Activated CD4-positive, alpha-beta T cell treated with anti-CD3 and anti-CD28 coated beads for 36 hours (primary cell): ENCODE measurements at regions of chr7 and their contacts with region 1.

Region 1: GRCh38 chr7:129376076-129376777 is 58.0 kb upstream of the STRIP2 start:
- DNase-seq: peak; percentile 80
- ATAC-seq: peak; percentile 88
- H3K4me3 Mint-ChIP-seq: no peak overlapping the region
- H3K27ac Mint-ChIP-seq: no peak overlapping the region
- H3K4me1 Mint-ChIP-seq: peaks cover 30% of the 10 kb centered on the region
- H3K27me3 Mint-ChIP-seq: no peaks in the 10 kb centered on the region

Region 2: GRCh38 chr7:128550920-128551319 is 825.3 kb before region 1 on chr7:
- CTCF ChIA-PET with region 1: no interaction called
- POLR2A ChIA-PET with region 1: no interaction called
- intact Hi-C with region 1: no loop called
- DNase-seq: no peak
- ATAC-seq: no peak
- H3K4me3 Mint-ChIP-seq: no peak overlapping the region
- H3K27ac Mint-ChIP-seq: no peak overlapping the region
- H3K4me1 Mint-ChIP-seq: peaks cover 4% of the 10 kb centered on the region
- H3K27me3 Mint-ChIP-seq: no peaks in the 10 kb centered on the region

Region 3: DNA sequence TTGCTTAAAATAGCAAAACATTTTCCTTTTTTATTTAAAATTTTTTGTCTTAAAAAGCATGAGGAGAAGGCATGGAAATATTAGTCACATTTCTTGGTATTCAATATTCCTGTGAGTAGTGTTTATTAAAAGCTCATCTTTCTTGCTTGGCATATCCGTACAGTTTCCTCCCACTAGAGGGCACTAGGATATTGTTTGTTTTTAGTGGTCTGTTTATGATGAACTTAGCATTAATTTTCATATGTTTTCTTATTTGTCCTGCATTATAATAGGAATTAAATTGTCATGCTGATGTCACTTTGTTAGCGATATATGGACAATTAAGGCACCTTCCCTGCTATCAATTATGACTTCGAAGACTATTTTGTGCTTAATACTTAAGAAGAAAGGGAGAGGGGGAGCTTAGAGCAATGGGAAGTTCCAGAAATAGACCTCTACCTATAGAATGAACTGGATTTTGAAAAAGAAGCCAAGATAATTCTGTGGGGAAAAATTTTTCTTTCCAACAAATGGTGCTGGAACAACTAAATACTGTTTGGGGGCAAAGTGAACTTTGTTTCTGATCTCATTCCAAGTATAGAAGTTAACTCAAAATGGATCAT is 33.0 kb before region 1 on chr7:
- CTCF ChIA-PET with region 1: interaction called, 14 read pairs
- POLR2A ChIA-PET with region 1: no interaction called
- intact Hi-C with region 1: loop called (anchors 1 to 2 kb)
- DNase-seq: peak; percentile 9
- ATAC-seq: peak; percentile 36
- H3K4me3 Mint-ChIP-seq: no peak overlapping the region
- H3K27ac Mint-ChIP-seq: no peak overlapping the region
- H3K4me1 Mint-ChIP-seq: peaks cover 29% of the 10 kb centered on the region
- H3K27me3 Mint-ChIP-seq: no peaks in the 10 kb centered on the region

Region 4: DNA sequence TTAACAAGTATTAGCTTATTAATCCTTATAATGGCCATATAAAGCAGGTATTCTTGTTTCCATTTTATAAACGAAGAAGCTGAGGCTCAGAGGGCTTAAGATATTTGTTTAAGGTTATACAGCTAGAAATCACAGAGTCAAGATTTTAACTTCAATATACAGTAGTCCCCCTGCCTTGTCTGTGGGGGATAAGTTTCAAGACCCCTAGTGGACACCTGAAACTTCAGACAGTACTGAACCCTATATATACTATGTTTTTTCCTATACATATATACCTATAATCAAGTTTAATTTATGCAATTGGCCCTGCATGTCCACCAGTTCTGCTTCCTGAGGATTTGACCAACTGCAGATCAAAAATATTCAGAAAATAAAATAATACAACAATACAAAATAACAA is 13.6 kb after region 1 on chr7:
- CTCF ChIA-PET with region 1: interaction called, 41 read pairs
- POLR2A ChIA-PET with region 1: no interaction called
- intact Hi-C with region 1: no loop called
- DNase-seq: no peak
- ATAC-seq: no peak
- H3K4me3 Mint-ChIP-seq: no peak overlapping the region
- H3K27ac Mint-ChIP-seq: no peak overlapping the region
- H3K4me1 Mint-ChIP-seq: peaks cover 9% of the 10 kb centered on the region
- H3K27me3 Mint-ChIP-seq: no peaks in the 10 kb centered on the region

Region 5: DNA sequence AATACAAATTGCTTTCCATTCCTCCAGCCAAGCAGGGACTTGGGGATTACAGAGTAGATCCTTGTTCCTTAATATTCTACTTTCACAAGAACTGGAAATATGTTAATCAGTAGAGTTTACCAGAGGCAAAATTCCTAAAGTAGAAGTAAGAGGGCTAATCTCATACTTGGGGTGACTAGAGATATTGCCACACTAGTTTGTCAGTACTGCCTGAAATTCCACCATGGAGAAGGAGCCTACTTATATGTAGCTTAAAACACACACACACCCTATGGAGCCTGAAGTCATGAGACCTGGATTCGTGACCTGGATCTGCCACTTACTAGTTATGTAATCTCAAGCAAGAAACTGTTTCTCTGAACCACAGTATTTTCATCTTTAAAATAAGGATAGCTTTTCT is 91.9 kb after region 1 on chr7:
- CTCF ChIA-PET with region 1: interaction called, 24 read pairs
- POLR2A ChIA-PET with region 1: no interaction called
- intact Hi-C with region 1: no loop called
- DNase-seq: no peak
- ATAC-seq: no peak
- H3K4me3 Mint-ChIP-seq: no peak overlapping the region
- H3K27ac Mint-ChIP-seq: no peak overlapping the region
- H3K4me1 Mint-ChIP-seq: peaks cover 16% of the 10 kb centered on the region
- H3K27me3 Mint-ChIP-seq: no peaks in the 10 kb centered on the region